CD4-positive, alpha-beta memory T cell (primary cell): ENCODE measurements at regions of chr1 and their contacts with region 1.

Region 1: DNA sequence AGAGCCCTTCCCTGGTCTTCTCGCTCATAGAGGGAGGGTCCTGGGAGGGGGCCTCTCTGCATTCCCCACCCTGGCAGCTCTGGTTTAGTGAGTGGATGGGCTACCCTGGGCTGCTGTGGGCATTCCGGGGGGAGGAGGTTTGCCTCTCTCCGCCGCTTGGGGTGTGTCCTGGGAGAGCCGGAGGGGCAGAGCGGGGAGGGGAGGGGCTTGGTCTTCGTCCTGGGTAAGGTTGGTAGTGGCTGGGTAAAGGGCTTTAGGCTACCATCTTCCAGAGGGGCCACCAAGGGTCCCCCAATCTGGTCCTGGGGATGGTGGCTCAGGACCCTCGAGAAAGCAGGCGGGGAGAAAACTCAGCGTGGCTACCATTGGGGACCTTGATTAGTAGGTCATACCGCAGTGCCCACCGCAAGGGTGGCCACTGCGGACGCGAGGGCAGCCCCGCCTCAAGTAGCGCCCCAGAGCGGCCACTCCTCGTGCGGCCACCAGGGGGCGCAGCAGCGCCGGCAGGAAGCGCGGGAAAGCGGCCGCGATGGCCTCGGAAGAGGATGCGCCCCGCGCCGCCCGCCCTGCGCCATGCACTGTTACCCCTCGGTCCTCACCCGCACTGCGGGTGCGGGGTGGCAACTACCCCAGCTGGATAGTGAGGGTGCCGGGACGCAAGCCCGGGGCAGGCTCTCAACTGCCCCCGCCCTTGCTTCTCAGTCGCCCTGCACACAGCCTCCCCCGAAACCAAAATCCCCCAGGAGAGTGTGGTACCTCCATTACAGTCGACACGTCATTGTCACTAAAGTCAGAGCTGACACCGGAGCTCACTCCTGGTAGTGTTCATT is 44.1 kb upstream of the SLC25A33 start:
- DNase-seq: peak in 4 of 5 donors; percentile 55 to 62 (median 59)
- H3K4me3 ChIP-seq: peak overlapping the region in 1 of 2 donors; percentile 24
- H3K4me3 Mint-ChIP-seq: peak overlapping the region; percentile 63 to 79 (median 72)
- H3K27ac ChIP-seq: no peak overlapping the region
- H3K27ac Mint-ChIP-seq: no peak overlapping the region
- H3K4me1 ChIP-seq: peaks cover 10% of the 10 kb centered on the region
- H3K4me1 Mint-ChIP-seq: peaks cover 5 to 6% (median 6%) of the 10 kb centered on the region in 4 donors
- H3K27me3 ChIP-seq: no peaks in the 10 kb centered on the region
- H3K27me3 Mint-ChIP-seq: peaks cover 6 to 9% of the 10 kb centered on the region in 2 donors

Region 2: GRCh38 chr1:9145021-9145668 is 350.0 kb before region 1 on chr1:
- CTCF ChIA-PET with region 1: interaction called, 7 read pairs
- POLR2A ChIA-PET with region 1: no interaction called
- intact Hi-C with region 1: loop called (anchors 1 kb)
- DNase-seq: no peak
- H3K4me3 ChIP-seq: no peak overlapping the region
- H3K4me3 Mint-ChIP-seq: no peak overlapping the region
- H3K27ac ChIP-seq: no peak overlapping the region
- H3K27ac Mint-ChIP-seq: no peak overlapping the region
- H3K4me1 ChIP-seq: no peaks in the 10 kb centered on the region
- H3K4me1 Mint-ChIP-seq: peaks cover 3 to 5% (median 4%) of the 10 kb centered on the region in 4 donors
- H3K27me3 ChIP-seq: no peaks in the 10 kb centered on the region
- H3K27me3 Mint-ChIP-seq: peaks cover 1 to 6% of the 10 kb centered on the region in 2 donors

Region 3: GRCh38 chr1:9269078-9269501 is 226.1 kb before region 1 on chr1:
- CTCF ChIA-PET with region 1: interaction called, 37 read pairs
- POLR2A ChIA-PET with region 1: no interaction called
- intact Hi-C with region 1: loop called (anchors 1 kb)
- DNase-seq: no peak
- H3K4me3 ChIP-seq: no peak overlapping the region
- H3K4me3 Mint-ChIP-seq: no peak overlapping the region
- H3K27ac ChIP-seq: no peak overlapping the region
- H3K27ac Mint-ChIP-seq: no peak overlapping the region
- H3K4me1 ChIP-seq: peaks cover 5% of the 10 kb centered on the region
- H3K4me1 Mint-ChIP-seq: peaks cover 0 to 9% (median 3%) of the 10 kb centered on the region in 4 donors
- H3K27me3 ChIP-seq: no peaks in the 10 kb centered on the region
- H3K27me3 Mint-ChIP-seq: no peaks in the 10 kb centered on the region

Region 4: DNA sequence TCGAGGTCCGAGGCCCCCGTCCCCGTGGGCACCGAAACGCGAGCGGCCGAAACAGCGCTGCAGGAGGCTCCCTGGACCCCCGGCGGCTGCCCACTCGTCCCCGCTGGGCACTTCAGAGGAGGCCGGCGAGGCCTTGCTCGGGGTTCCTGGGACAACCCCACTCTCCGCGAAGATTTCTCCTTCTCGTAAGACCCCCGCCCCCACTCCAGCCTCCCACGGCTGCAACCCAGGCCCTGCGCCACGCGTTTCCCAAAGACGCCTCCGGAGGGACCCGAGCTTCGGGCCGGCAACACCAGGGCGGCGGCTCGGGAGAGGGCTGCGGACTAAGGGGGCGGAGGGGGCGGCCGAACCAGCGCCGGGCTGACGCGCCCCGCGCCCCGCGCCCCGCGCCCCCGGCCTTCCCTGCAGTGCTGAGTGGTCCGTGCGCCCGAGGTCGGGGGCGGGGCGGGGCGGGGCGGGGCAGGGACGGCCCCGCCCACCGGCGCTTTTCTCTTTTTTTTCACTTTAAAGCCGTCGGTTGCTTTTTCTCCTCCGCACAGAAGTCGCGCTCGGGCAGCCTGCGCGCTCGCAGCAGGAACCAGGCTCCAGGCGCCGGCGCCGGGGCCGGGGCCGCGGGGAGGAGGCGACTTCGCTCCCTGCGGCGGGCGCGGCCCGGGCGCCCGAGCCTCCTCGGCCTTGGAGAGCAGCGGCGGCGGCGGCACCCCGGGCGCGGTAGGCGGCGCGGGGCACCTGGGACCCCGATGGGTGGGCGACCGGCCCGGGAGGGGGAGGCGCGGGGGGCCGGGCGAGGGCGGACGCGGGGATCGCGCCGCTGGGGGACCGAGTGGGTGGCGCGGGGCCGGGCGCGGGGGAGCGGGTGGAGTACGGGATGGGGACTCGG is 202.5 kb before region 1 on chr1 and contains the start of gene SPSB1:
- CTCF ChIA-PET with region 1: interaction called, 82 read pairs
- POLR2A ChIA-PET with region 1: interaction called, 3 read pairs
- intact Hi-C with region 1: loop called (anchors 1 kb)
- DNase-seq: peak; percentile 46 to 67 (median 56)
- H3K4me3 ChIP-seq: peak within 1 kb of the TSS; percentile 64 to 85
- H3K4me3 Mint-ChIP-seq: peak within 1 kb of the TSS; percentile 68 to 78 (median 75)
- H3K27ac ChIP-seq: peak within 1 kb of the TSS; percentile 27
- H3K27ac Mint-ChIP-seq: peak within 1 kb of the TSS in 5 of 7 donors; percentile 40 to 87 (median 66)
- H3K4me1 ChIP-seq: peaks cover 31% of the 10 kb centered on the region
- H3K4me1 Mint-ChIP-seq: peaks cover 17 to 35% (median 26%) of the 10 kb centered on the region in 4 donors
- H3K27me3 ChIP-seq: no peaks in the 10 kb centered on the region
- H3K27me3 Mint-ChIP-seq: no peaks in the 10 kb centered on the region
- total RNA-seq, gene SPSB1: 3.3 to 4.1 TPM

Region 5: GRCh38 chr1:9529190-9529589 is 34.0 kb after region 1 on chr1:
- CTCF ChIA-PET with region 1: no interaction called
- POLR2A ChIA-PET with region 1: no interaction called
- intact Hi-C with region 1: no loop called
- DNase-seq: no peak
- H3K4me3 ChIP-seq: no peak overlapping the region
- H3K4me3 Mint-ChIP-seq: no peak overlapping the region
- H3K27ac ChIP-seq: no peak overlapping the region
- H3K27ac Mint-ChIP-seq: no peak overlapping the region
- H3K4me1 ChIP-seq: no peaks in the 10 kb centered on the region
- H3K4me1 Mint-ChIP-seq: no peaks in the 10 kb centered on the region
- H3K27me3 ChIP-seq: no peaks in the 10 kb centered on the region
- H3K27me3 Mint-ChIP-seq: no peaks in the 10 kb centered on the region

Region 6: GRCh38 chr1:9573723-9574122 is 78.6 kb after region 1 on chr1:
- CTCF ChIA-PET with region 1: interaction called, 68 read pairs
- POLR2A ChIA-PET with region 1: no interaction called
- intact Hi-C with region 1: no loop called
- DNase-seq: peak in 3 of 5 donors; percentile 13 to 22 (median 20)
- H3K4me3 ChIP-seq: no peak overlapping the region
- H3K4me3 Mint-ChIP-seq: no peak overlapping the region
- H3K27ac ChIP-seq: no peak overlapping the region
- H3K27ac Mint-ChIP-seq: peak overlapping the region in 1 of 7 donors; percentile 13
- H3K4me1 ChIP-seq: no peaks in the 10 kb centered on the region
- H3K4me1 Mint-ChIP-seq: peaks cover 0 to 1% (median 0%) of the 10 kb centered on the region in 4 donors
- H3K27me3 ChIP-seq: no peaks in the 10 kb centered on the region
- H3K27me3 Mint-ChIP-seq: no peaks in the 10 kb centered on the region

Region 7: GRCh38 chr1:9676815-9677393 is 181.8 kb after region 1 on chr1:
- CTCF ChIA-PET with region 1: no interaction called
- POLR2A ChIA-PET with region 1: no interaction called
- intact Hi-C with region 1: no loop called
- DNase-seq: no peak
- H3K4me3 ChIP-seq: no peak overlapping the region
- H3K4me3 Mint-ChIP-seq: peak overlapping the region in 5 of 8 donors; percentile 0 to 42 (median 37)
- H3K27ac ChIP-seq: no peak overlapping the region
- H3K27ac Mint-ChIP-seq: peak overlapping the region; percentile 70 to 90 (median 82)
- H3K4me1 ChIP-seq: peaks cover 71% of the 10 kb centered on the region
- H3K4me1 Mint-ChIP-seq: peaks cover 33 to 74% (median 52%) of the 10 kb centered on the region in 4 donors
- H3K27me3 ChIP-seq: no peaks in the 10 kb centered on the region
- H3K27me3 Mint-ChIP-seq: no peaks in the 10 kb centered on the region